Activated naive CD4-positive, alpha-beta T cell treated with anti-CD3 and anti-CD28 coated beads for 36 hours (primary cell): ENCODE measurements at regions of chr2 and their contacts with region 1.

Region 1: DNA sequence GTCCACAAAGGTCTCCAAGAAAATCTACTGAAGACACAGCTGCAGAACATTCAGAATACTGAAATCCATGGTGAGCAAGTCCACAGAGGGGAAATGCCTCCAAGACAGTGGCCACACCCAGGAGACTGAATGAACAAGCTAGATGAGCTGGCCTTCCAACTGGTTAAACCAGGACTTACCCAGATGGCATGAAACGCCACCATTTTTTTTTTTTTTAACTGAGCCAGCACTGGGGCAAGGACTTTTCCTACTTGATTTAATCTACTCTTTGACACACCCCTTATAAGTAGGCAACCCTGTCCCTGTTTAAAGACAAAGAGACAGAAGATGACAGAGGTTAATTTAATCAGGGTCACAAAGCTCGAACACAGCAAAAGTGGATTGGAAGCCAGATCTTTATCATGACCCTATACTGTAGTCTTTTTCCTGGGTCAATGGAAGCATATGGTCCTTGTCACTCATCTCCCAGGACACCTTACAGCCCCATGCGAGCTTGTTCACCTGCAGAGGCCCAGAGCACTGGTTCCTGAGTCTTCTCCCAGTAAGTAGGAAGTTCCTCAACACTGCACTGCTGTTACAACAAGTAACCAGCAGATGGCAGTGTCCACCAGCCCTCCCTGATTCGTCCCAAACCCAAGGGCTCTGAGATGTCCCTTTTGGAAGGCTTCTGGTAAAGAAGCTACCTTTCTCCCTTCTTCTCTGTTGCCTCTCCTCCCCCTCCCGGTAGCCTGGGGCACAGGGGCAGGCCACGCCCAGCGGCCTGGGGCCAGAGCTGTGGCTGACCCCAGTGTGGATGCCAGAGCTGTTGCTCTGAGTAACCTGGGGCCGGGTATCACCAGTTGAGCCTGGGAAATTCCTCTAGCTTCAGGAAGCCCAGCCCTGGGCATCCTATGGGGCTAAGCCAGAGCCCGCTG is 5.6 kb upstream of the GDF7 start:
- DNase-seq: peak; percentile 77
- H3K4me3 Mint-ChIP-seq: no peak overlapping the region
- H3K27ac Mint-ChIP-seq: no peak overlapping the region
- H3K4me1 Mint-ChIP-seq: peaks cover 7% of the 10 kb centered on the region
- H3K27me3 Mint-ChIP-seq: peaks cover 44% of the 10 kb centered on the region

Region 2: GRCh38 chr2:20483194-20483895 is 178.0 kb before region 1 on chr2:
- CTCF ChIA-PET with region 1: no interaction called
- intact Hi-C with region 1: no loop called
- DNase-seq: no peak
- H3K4me3 Mint-ChIP-seq: no peak overlapping the region
- H3K27ac Mint-ChIP-seq: no peak overlapping the region
- H3K4me1 Mint-ChIP-seq: no peaks in the 10 kb centered on the region
- H3K27me3 Mint-ChIP-seq: no peaks in the 10 kb centered on the region

Region 3: DNA sequence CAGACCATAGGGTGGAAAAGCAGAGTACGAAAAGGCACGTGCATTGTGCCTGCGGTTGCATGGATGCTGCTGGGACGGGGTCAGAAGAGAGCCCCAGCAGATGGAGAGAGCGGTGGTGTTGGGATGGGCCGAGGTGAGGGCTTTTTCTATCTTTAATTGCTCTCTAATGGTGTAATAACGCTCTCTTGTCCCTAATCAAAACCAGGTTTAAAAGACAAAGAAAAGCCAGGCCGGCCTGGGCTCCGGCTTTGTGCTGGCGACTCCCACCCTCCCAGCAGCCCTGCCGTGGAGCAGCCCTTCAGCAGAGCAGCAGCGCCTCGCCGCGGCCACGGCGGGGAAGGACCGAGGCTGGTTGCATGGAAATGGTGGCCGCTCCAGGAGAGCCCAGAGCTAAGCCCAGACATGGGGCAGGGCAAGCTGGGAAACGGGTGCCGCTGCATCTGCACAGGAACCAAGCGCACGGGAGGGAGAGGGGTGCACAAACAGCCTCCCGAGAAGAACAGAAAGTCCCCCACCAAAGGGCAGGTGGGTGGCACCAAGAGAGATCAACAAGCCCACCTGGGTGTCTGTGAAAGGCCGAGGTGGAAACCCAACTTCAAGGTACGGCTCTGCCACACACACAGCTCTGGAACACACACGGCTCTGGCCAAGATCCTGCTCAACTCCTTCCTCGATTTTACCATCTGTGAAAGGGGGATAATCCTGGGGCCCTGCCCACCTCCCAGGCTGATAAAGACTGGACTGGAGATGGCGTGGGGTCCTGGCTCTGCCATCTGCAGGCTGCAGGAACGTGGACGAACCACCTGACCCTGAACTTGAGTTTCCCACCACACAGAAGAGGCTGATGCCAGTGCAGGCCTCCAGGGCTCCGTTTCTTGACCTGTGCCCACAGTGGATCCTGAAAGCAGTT is 25.4 kb before region 1 on chr2:
- CTCF ChIA-PET with region 1: no interaction called
- intact Hi-C with region 1: no loop called
- DNase-seq: peak; percentile 60
- H3K4me3 Mint-ChIP-seq: no peak overlapping the region
- H3K27ac Mint-ChIP-seq: no peak overlapping the region
- H3K4me1 Mint-ChIP-seq: no peaks in the 10 kb centered on the region
- H3K27me3 Mint-ChIP-seq: no peaks in the 10 kb centered on the region

Region 4: GRCh38 chr2:20675701-20676352 is 14.5 kb after region 1 on chr2:
- CTCF ChIA-PET with region 1: interaction called, 14 read pairs
- intact Hi-C with region 1: no loop called
- DNase-seq: peak; percentile 19
- H3K4me3 Mint-ChIP-seq: no peak overlapping the region
- H3K27ac Mint-ChIP-seq: no peak overlapping the region
- H3K4me1 Mint-ChIP-seq: no peaks in the 10 kb centered on the region
- H3K27me3 Mint-ChIP-seq: peaks cover 5% of the 10 kb centered on the region

Region 5: GRCh38 chr2:20916604-20917286 is 255.4 kb after region 1 on chr2:
- CTCF ChIA-PET with region 1: interaction called, 11 read pairs
- intact Hi-C with region 1: loop called (anchors 1 kb)
- DNase-seq: no peak
- H3K4me3 Mint-ChIP-seq: no peak overlapping the region
- H3K27ac Mint-ChIP-seq: no peak overlapping the region
- H3K4me1 Mint-ChIP-seq: no peaks in the 10 kb centered on the region
- H3K27me3 Mint-ChIP-seq: peaks cover 23% of the 10 kb centered on the region

Region 6: DNA sequence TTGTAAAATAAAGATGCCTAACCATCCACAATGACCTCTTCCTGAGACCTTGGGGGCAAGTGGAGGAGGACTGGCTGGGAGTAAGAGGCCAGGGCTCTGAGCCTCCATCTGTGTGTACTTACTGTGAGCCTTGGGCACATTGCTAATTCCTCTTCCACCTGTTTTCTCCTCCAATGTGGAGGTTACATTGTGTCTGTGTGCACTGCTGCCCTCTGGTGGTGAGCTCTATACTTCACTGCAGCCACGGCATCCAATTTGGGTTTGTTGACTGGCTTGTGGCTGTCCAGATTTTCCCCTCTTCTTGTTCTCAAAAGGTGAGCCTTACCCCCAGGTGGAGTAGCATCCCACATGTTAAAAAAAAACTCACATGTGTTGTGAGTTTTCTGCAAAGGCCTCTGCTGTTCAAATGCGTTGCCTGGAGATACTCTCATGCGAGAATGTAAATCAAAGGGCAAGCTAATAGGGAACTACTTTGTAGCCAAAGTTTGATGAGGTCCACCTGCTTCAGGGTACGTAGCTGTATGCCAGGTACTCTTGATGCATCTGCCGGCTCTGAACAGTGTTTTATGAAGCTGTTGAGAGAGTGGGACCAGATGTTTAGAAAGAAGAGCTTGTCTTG is 301.7 kb after region 1 on chr2:
- CTCF ChIA-PET with region 1: interaction called, 174 read pairs
- intact Hi-C with region 1: loop called (anchors 1 kb)
- DNase-seq: peak; percentile 81
- H3K4me3 Mint-ChIP-seq: no peak overlapping the region
- H3K27ac Mint-ChIP-seq: no peak overlapping the region
- H3K4me1 Mint-ChIP-seq: no peaks in the 10 kb centered on the region
- H3K27me3 Mint-ChIP-seq: peaks cover 9% of the 10 kb centered on the region

Region 7: GRCh38 chr2:21118302-21118920 is 457.1 kb after region 1 on chr2:
- CTCF ChIA-PET with region 1: interaction called, 11 read pairs
- intact Hi-C with region 1: loop called (anchors 1 kb)
- DNase-seq: peak; percentile 41
- H3K4me3 Mint-ChIP-seq: no peak overlapping the region
- H3K27ac Mint-ChIP-seq: no peak overlapping the region
- H3K4me1 Mint-ChIP-seq: no peaks in the 10 kb centered on the region
- H3K27me3 Mint-ChIP-seq: peaks cover 8% of the 10 kb centered on the region